ENCODE measurements at regions of chr18 and their contacts with region 1.

Region 1: DNA sequence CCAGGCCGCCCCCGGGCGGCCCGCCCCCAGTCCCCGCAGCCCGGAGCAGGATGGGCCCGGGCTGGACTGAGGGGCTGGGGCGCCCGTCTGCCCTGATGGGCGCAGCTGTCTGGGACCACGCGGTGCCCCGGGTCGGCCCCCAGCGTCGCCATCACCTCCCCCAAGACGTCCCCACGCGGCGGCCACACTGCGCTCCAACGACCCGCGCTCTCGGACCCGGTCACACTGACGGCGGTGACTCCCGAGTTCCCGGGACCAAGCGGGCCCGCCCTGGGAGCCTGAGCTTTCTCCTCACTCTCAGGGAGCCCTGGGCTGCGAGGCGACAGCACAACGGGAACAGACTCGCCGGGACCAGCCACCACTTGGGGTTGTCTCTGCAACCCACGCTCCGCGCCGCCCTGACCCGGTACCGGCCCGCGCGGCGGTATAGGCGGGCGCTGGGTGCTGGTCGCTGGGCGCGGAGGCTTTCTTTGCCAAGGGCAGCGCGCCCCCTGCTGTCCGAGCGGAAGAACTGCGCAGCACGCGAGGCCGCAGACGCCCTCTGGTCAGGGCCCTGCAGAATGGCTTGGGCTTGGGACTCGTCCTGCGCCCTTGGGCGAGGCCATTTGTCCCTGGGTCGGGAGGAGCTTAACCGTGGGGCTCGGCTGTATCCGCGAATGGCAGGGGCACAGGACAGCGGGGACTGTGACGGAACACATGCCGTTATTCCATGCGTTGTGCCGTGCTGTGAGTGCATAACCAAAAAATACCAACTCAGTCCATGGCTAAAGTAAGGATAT is 54.8 kb upstream of the ANKRD62 start:
- DNase-seq: peak; percentile 78
- H3K4me3 Mint-ChIP-seq: peak overlapping the region; percentile 59
- H3K27ac Mint-ChIP-seq: no peak overlapping the region
- H3K4me1 Mint-ChIP-seq: peaks cover 13% of the 10 kb centered on the region
- H3K27me3 Mint-ChIP-seq: peaks cover 24% of the 10 kb centered on the region

Region 2: DNA sequence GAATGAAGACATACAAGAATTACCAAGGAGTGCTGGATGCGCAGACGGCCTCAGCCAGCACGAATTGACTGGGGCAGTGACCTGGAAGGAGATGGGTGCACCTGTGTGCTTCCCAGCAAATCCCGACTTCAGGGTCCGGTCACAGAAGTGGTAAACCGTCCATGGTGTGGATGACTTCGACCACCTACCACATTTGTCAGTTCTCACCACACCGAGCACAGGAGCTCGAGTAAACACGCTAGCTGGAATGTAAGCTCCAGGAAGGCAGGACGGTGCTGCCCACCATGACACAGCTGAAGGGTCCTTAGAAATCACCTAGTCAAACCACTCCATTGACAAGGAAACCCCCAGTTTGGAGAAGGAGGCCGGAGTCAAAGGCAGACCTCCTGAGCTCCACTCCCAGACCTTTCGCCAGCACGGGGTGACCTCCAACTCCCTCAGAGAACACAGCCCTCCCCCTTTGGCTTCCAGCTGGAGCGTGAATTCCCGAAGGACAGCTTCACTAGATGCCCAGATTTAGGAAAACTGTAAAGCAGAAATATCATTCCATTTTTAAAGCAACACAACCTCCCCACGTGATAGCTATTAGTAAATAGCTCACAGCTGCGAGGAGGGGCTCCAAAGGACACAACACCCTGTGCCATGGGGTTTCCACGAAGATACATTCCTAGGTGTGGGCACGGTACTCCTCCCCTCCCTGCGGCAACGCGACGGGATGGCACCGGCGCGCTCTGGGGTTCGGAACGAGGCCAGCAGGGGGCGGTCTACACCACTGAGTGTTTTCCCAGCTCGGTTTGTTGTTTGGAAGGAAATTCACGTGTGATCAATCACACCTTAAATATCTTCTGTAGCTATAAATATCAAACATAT is 383.9 kb before region 1 on chr18:
- CTCF ChIA-PET with region 1: interaction called, 12 read pairs
- POLR2A ChIA-PET with region 1: no interaction called
- intact Hi-C with region 1: loop called (anchors 10 kb)
- DNase-seq: peak; percentile 64
- H3K4me3 Mint-ChIP-seq: no peak overlapping the region
- H3K27ac Mint-ChIP-seq: no peak overlapping the region
- H3K4me1 Mint-ChIP-seq: peaks cover 5% of the 10 kb centered on the region
- H3K27me3 Mint-ChIP-seq: peaks cover 27% of the 10 kb centered on the region

Region 3: DNA sequence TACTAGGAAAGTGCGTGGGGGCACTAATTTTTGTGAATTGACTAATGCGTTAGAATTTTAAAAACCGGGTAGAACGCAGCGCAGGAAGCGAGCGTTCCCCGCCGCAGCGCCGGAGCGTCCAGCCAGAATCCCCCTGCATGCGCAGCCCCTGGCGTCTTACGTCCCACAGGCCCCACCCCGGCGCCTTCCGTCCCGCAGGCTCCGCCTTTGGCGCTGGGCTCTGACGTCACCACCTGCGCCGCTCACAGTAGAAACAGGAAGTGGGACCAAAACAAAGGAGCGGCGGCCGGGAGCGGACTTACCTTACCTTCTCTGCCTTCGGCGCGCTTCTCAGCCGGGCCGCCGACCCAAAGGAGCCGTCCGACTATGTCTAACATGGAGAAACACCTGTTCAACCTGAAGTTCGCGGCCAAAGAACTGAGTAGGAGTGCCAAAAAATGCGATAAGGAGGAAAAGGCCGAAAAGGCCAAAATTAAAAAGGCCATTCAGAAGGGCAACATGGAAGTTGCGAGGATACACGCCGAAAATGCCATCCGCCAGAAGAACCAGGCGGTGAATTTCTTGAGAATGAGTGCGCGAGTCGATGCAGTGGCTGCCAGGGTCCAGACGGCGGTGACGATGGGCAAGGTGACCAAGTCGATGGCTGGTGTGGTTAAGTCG is 187.6 kb before region 1 on chr18 and contains the start of gene CHMP1B:
- CTCF ChIA-PET with region 1: interaction called, 3 read pairs
- POLR2A ChIA-PET with region 1: no interaction called
- intact Hi-C with region 1: loop called (anchors 5 kb)
- DNase-seq: peak; percentile 98
- H3K4me3 Mint-ChIP-seq: peak within 1 kb of the TSS; percentile 100
- H3K27ac Mint-ChIP-seq: peak within 1 kb of the TSS; percentile 95
- H3K4me1 Mint-ChIP-seq: peaks cover 33% of the 10 kb centered on the region
- H3K27me3 Mint-ChIP-seq: no peaks in the 10 kb centered on the region
- total RNA-seq, gene CHMP1B: 21.2 to 22.0 TPM

Region 4: GRCh38 chr18:11883153-11883552 is 155.7 kb before region 1 on chr18:
- CTCF ChIA-PET with region 1: no interaction called
- POLR2A ChIA-PET with region 1: no interaction called
- intact Hi-C with region 1: no loop called
- DNase-seq: no peak
- H3K4me3 Mint-ChIP-seq: no peak overlapping the region
- H3K27ac Mint-ChIP-seq: no peak overlapping the region
- H3K4me1 Mint-ChIP-seq: peaks cover 9% of the 10 kb centered on the region
- H3K27me3 Mint-ChIP-seq: no peaks in the 10 kb centered on the region

Region 5: DNA sequence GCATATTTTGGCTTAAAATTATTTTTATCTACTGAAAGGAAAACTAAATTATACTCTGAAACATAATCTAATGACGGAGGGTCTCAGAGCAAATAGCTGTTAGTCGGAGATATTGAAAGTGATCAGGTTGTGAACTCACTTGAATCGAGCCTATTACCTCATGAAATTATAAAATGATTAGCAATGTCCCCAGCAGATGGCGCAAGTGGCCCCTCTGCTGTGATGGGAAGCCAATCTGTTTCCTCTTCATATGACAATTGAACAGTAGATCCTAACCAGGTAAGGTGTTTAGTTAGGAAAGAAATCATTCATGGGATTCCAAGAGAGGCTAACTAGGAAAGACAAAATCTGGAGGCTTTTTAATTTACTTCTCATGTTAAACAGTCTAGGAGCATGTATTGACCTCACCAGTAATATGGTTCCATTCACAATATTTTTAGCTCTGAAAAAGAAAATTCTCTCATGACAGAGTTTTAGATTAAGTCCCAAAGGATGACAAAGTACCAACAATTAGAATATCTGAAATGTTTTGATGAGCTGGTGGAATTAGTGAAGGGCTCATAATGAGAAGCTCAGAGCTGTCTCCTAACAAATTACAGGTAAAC is 100.9 kb before region 1 on chr18:
- CTCF ChIA-PET with region 1: interaction called, 155 read pairs
- POLR2A ChIA-PET with region 1: interaction called, 3 read pairs
- intact Hi-C with region 1: loop called (anchors 1 kb)
- DNase-seq: peak; percentile 79
- H3K4me3 Mint-ChIP-seq: no peak overlapping the region
- H3K27ac Mint-ChIP-seq: no peak overlapping the region
- H3K4me1 Mint-ChIP-seq: no peaks in the 10 kb centered on the region
- H3K27me3 Mint-ChIP-seq: no peaks in the 10 kb centered on the region

Region 6: GRCh38 chr18:11995445-11996189 is 43.2 kb before region 1 on chr18:
- CTCF ChIA-PET with region 1: interaction called, 10 read pairs
- POLR2A ChIA-PET with region 1: no interaction called
- intact Hi-C with region 1: no loop called
- DNase-seq: peak; percentile 71
- H3K4me3 Mint-ChIP-seq: no peak overlapping the region
- H3K27ac Mint-ChIP-seq: no peak overlapping the region
- H3K4me1 Mint-ChIP-seq: peaks cover 8% of the 10 kb centered on the region
- H3K27me3 Mint-ChIP-seq: no peaks in the 10 kb centered on the region

Region 7: GRCh38 chr18:12159447-12159846 is 120.6 kb after region 1 on chr18:
- CTCF ChIA-PET with region 1: no interaction called
- POLR2A ChIA-PET with region 1: no interaction called
- intact Hi-C with region 1: no loop called
- DNase-seq: no peak
- H3K4me3 Mint-ChIP-seq: no peak overlapping the region
- H3K27ac Mint-ChIP-seq: no peak overlapping the region
- H3K4me1 Mint-ChIP-seq: no peaks in the 10 kb centered on the region
- H3K27me3 Mint-ChIP-seq: no peaks in the 10 kb centered on the region

Measured in activated CD4-positive, alpha-beta memory T cell treated with anti-CD3 and anti-CD28 coated beads for 36 hours (primary cell).